ENCODE measurements at regions of chr11 and their contacts with region 1.

Region 1: DNA sequence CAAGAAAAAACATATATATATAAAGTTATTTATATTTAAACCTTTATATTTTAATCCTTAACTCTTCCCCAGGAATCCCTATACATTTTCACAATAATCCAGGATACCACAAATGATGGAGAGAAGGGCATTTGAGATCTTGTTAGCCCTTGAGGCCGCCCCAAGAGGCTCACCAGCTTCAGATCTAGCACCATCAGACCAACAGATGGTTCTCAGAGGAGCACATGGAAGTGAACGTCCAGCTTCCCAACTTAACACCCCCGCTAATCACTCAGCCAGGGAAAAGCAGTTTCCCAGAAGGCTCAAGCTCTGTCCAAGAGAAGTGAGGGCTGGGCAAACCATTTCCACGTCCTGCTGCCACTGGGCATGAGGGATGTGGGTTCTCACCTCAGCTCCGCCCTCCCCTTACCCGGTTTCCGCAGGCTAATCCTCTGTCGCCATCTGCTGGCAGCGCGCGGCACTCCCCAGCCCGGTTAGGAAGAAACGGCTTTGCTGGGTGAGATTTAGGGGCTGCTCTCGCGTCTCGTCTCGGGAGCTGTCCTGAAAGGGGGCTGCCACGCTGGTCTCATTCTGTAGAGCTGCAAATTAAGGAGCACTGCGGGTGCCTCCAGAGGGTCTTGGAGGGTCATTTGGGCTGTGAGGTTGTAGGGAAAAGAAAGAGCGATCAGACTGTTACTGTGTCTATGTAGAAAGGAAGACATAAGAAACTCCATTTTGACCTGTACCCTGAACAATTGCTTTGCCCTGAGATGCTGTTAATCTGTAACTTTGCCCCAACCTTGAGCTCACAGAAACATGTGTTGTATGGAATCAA is 6.8 kb upstream of the FAM111A start:
- DNase-seq: peak; percentile 80 to 93 (median 89)
- ATAC-seq: peak; percentile 100
- H3K4me3 ChIP-seq: no peak overlapping the region
- H3K4me3 Mint-ChIP-seq: peak overlapping the region; percentile 66
- H3K27ac ChIP-seq: peak overlapping the region in 1 of 2 experiments; percentile 23
- H3K27ac Mint-ChIP-seq: peak overlapping the region; percentile 55
- H3K4me1 ChIP-seq: peaks cover 7% of the 10 kb centered on the region
- H3K4me1 Mint-ChIP-seq: peaks cover 8% of the 10 kb centered on the region
- H3K27me3 ChIP-seq: no peaks in the 10 kb centered on the region
- H3K27me3 Mint-ChIP-seq: no peaks in the 10 kb centered on the region
- CTCF ChIP-seq: peak; percentile 98

Region 2: DNA sequence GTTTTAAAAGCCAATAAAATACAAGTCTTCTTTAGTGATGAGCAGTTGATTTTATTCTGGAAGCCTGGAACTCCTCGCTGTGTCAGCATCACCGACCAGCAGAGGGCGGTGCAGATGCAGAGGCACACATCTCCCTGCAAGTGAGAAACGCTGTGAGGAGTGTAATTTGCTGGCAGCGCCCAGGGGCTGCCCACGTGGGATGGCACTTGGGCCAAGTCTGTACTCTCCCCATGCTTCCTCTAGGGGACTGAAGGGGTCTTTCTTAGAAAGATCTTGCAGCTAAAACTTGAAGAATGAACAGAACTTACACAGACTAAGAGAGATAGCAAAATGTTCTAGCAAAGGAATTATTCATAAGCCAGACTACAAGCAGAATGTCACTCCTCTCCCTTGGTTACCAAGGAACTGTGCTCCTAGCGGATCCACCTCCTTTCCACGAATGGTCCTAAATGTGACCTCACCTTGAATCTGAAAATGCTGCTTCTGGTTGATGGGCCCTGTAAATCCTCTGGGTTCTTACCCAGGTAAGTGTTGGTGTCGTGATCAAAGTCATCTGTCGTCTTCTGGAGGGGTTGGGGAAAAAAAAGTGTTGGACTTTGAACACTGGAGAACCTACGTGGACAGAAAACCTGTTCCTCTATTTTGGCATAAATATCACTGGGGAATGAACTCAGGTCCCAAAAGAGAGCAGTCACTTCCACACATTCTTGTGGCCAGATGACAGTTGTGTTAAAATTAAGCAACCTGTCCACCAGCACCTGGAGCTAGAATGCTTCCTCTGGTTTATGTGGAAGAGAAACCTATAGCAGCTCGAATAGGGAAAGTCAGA is 481.6 kb before region 1 on chr11:
- CTCF ChIA-PET with region 1: interaction called, 6 read pairs
- POLR2A ChIA-PET with region 1: interaction called, 7 read pairs
- intact Hi-C with region 1: loop called (anchors 2 to 5 kb)
- DNase-seq: peak; percentile 53 to 85 (median 79)
- ATAC-seq: peak; percentile 98
- H3K4me3 ChIP-seq: no peak overlapping the region
- H3K4me3 Mint-ChIP-seq: no peak overlapping the region
- H3K27ac ChIP-seq: no peak overlapping the region
- H3K27ac Mint-ChIP-seq: no peak overlapping the region
- H3K4me1 ChIP-seq: no peaks in the 10 kb centered on the region
- H3K4me1 Mint-ChIP-seq: peaks cover 4% of the 10 kb centered on the region
- H3K27me3 ChIP-seq: no peaks in the 10 kb centered on the region
- H3K27me3 Mint-ChIP-seq: no peaks in the 10 kb centered on the region
- CTCF ChIP-seq: peak; percentile 82

Region 3: GRCh38 chr11:58958500-58958899 is 177.4 kb before region 1 on chr11:
- CTCF ChIA-PET with region 1: interaction called, 6 read pairs
- POLR2A ChIA-PET with region 1: no interaction called
- intact Hi-C with region 1: loop called in 1 of 2 experiments (anchors 5 kb)
- DNase-seq: peak in 6 of 9 experiments; percentile 2 to 56 (median 30)
- ATAC-seq: no peak
- H3K4me3 ChIP-seq: no peak overlapping the region
- H3K4me3 Mint-ChIP-seq: no peak overlapping the region
- H3K27ac ChIP-seq: no peak overlapping the region
- H3K27ac Mint-ChIP-seq: no peak overlapping the region
- H3K4me1 ChIP-seq: no peaks in the 10 kb centered on the region
- H3K4me1 Mint-ChIP-seq: no peaks in the 10 kb centered on the region
- H3K27me3 ChIP-seq: no peaks in the 10 kb centered on the region
- H3K27me3 Mint-ChIP-seq: peaks cover 9% of the 10 kb centered on the region
- CTCF ChIP-seq: peak; percentile 24

Region 4: DNA sequence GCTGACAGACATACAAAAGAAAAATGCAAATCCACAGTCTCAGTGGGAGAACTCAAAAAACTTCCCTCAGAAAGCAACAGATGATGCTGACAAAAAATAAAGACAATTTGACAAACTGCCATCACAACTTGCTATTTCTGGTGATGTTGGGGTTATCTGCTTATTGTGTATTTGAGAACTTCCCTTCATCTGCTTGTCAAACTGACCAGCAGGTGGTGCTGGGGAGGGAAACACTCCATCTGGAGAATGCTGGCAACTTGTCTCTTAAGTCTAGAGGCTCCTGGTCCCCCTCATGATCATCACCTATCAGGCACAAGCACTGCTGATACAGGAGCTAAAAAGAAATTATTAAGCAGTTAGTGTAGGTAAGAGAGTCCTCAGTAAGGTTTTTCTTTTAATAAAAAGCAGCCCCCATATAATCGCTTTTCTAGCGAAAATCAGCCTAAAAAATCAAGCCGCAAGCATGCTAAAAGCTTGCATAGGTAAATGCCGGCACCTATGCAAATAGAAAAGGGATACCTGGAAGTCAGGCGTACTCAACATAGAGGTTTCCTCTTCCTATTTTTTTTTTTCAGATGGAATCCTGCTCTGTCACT is 38.6 kb before region 1 on chr11:
- CTCF ChIA-PET with region 1: interaction called, 16 read pairs
- POLR2A ChIA-PET with region 1: interaction called, 5 read pairs
- intact Hi-C with region 1: loop called (anchors 1 kb)
- DNase-seq: peak; percentile 44 to 81 (median 67)
- ATAC-seq: peak; percentile 79
- H3K4me3 ChIP-seq: no peak overlapping the region
- H3K4me3 Mint-ChIP-seq: no peak overlapping the region
- H3K27ac ChIP-seq: no peak overlapping the region
- H3K27ac Mint-ChIP-seq: no peak overlapping the region
- H3K4me1 ChIP-seq: peaks cover 3% of the 10 kb centered on the region
- H3K4me1 Mint-ChIP-seq: peaks cover 7% of the 10 kb centered on the region
- H3K27me3 ChIP-seq: peaks cover 2 to 4% of the 10 kb centered on the region in 2 experiments
- H3K27me3 Mint-ChIP-seq: peaks cover 30% of the 10 kb centered on the region
- CTCF ChIP-seq: peak; percentile 72

Region 5: DNA sequence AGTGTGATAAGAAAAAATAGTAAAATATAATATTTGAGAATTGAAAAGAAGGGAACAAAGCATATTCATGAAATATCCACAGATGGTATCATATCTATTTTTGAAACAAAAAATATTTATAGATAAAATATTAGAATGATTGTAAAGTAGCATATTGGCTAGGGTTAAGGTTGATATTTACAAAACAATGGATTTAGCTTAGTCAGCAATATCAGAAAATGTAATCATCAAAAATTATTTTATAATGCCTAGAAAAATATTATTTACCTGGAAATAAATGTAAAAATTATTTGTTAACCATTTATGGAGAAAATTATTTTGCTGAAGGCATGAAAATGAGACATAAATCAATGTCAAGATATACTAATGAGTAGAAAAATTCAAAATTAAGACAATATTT is 16.0 kb before region 1 on chr11:
- CTCF ChIA-PET with region 1: interaction called, 13 read pairs
- POLR2A ChIA-PET with region 1: no interaction called
- intact Hi-C with region 1: no loop called
- DNase-seq: no peak
- ATAC-seq: no peak
- H3K4me3 ChIP-seq: no peak overlapping the region
- H3K4me3 Mint-ChIP-seq: no peak overlapping the region
- H3K27ac ChIP-seq: no peak overlapping the region
- H3K27ac Mint-ChIP-seq: no peak overlapping the region
- H3K4me1 ChIP-seq: no peaks in the 10 kb centered on the region
- H3K4me1 Mint-ChIP-seq: no peaks in the 10 kb centered on the region
- H3K27me3 ChIP-seq: no peaks in the 10 kb centered on the region
- H3K27me3 Mint-ChIP-seq: no peaks in the 10 kb centered on the region
- CTCF ChIP-seq: no peak

Region 6: GRCh38 chr11:59224351-59224928 is 88.6 kb after region 1 on chr11:
- CTCF ChIA-PET with region 1: no interaction called
- POLR2A ChIA-PET with region 1: no interaction called
- intact Hi-C with region 1: no loop called
- DNase-seq: peak in 1 of 9 experiments; percentile 18
- ATAC-seq: no peak
- H3K4me3 ChIP-seq: no peak overlapping the region
- H3K4me3 Mint-ChIP-seq: no peak overlapping the region
- H3K27ac ChIP-seq: no peak overlapping the region
- H3K27ac Mint-ChIP-seq: no peak overlapping the region
- H3K4me1 ChIP-seq: no peaks in the 10 kb centered on the region
- H3K4me1 Mint-ChIP-seq: no peaks in the 10 kb centered on the region
- H3K27me3 ChIP-seq: no peaks in the 10 kb centered on the region
- H3K27me3 Mint-ChIP-seq: peaks cover 3% of the 10 kb centered on the region
- CTCF ChIP-seq: no peak

Measured in CD8-positive, alpha-beta T cell (primary cell).